Activated T-helper 1 cell treated with anti-CD3 and anti-CD28 coated beads, Interleukin-12 subunit alpha, Interleukin-12 subunit beta, Interleukin-2, Interleukin-4 antibody, amounts not matched to agents 30 ng/mL and 10 ng/mL and 1 ng/mL, durations not matched to agents 14 hours and 24 hours and 36 hours (primary cell): ENCODE measurements at regions of chr19 and their contacts with region 1.

Region 1: DNA sequence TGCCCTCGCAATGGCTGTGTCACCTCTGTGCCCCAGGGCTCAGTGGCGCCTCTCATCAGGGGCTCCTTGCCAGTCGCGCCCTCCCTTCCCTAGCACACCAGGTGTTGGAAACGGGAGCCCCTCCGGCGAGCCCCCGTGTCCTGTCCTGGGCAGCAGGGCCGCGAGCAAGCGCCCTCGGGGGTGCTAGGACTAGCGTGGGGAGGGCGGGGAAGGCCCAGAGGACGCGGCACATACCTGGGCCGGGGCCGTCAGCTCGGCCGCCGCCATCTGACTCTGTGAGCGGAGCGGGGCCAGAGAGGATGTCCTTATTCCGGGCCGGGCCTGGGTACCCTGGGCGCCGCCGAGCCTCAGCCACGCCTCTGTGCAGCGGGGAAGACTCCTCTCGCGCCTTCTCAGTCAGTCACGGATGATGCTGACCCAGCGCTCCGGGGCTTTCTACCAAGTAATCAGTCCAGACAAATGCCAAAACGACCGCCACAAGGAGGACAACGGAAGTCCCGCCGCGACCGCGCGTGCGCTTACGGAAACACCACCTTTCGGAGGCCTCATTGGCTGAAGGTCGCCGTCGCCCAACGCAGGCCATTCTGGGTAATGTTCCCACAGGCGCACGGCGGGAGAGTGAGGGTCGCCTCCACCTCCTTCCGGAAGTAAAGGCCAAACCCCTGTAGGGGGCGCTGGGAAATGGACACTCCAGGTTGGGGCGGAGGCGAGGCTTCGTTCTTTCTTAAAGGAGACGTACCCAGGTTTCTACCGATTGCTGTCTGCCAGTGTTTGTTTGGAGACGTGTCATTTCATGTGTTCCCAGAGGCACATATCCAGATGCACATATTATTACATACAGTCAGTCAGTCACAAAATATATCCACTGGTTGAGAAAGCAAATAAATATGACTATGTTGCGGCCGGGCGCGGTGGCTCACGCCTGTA is at the start of gene ZNF256:
- DNase-seq: peak; percentile 78
- H3K4me3 Mint-ChIP-seq: peak within 1 kb of the TSS; percentile 94
- H3K27ac Mint-ChIP-seq: peak within 1 kb of the TSS; percentile 89
- H3K4me1 Mint-ChIP-seq: peaks cover 12% of the 10 kb centered on the region
- H3K27me3 Mint-ChIP-seq: no peaks in the 10 kb centered on the region
- total RNA-seq, gene ZNF256: 2.5 and 3.4 TPM in 2 replicates

Region 2: DNA sequence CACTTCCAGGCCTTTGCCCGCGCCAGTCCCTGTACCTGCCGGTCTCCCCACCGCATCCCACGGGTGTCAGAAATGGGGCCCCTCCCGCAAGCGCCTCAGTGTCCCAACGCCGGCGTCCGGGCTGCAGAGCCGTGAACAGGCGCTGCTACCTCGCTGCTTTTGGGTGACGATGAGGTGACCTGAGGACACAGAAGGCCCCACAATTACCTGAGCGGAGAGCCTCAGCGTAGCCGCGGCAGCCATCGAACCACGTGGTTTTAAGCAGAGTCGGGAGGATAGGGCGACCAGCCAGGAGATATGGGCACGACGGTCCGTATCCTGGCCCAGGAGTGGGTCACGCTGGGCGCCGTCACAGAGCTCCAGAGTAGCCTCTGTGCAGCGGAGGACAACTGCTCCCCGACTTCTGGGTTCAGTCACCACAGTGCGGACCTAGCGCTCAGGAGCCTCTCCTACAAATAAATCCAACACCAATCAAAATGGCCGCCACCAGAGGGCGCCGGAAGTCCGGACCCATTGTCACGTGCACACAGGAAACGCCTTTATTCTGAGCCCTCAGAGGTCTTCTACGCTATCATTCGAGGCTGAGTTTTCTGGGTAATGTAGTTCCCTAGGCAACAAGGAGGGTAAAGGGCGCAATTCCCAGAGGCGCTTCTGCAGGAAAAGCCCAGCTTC is 58.8 kb before region 1 on chr19 and contains the start of gene ZNF814:
- intact Hi-C with region 1: no loop called
- DNase-seq: peak; percentile 56
- H3K4me3 Mint-ChIP-seq: peak within 1 kb of the TSS; percentile 89
- H3K27ac Mint-ChIP-seq: peak within 1 kb of the TSS; percentile 75
- H3K4me1 Mint-ChIP-seq: peaks cover 10% of the 10 kb centered on the region
- H3K27me3 Mint-ChIP-seq: no peaks in the 10 kb centered on the region
- total RNA-seq, gene ZNF814: 14.1 and 15.7 TPM in 2 replicates

Region 3: DNA sequence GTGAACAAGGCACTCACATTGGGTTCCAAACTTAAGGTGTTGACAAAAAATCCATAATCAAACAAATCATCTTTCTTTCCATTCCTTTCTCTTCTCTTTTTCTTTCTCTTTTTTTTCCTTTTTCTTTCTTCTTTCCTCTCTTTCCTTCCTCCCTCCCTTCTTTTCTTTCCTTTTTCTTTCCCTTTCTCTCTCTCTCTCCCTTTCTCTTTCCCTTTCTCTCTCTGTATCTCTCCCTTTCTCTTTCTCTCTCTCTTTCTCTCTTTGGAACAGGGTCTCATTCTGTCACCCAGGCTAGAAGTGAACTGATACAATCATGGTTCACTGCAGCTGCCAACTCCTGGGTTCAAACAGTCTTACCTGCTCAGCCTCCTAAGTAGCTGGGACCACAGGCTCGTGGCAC is 14.3 kb after region 1 on chr19:
- intact Hi-C with region 1: no loop called
- DNase-seq: no peak
- H3K4me3 Mint-ChIP-seq: no peak overlapping the region
- H3K27ac Mint-ChIP-seq: no peak overlapping the region
- H3K4me1 Mint-ChIP-seq: no peaks in the 10 kb centered on the region
- H3K27me3 Mint-ChIP-seq: no peaks in the 10 kb centered on the region

Region 4: DNA sequence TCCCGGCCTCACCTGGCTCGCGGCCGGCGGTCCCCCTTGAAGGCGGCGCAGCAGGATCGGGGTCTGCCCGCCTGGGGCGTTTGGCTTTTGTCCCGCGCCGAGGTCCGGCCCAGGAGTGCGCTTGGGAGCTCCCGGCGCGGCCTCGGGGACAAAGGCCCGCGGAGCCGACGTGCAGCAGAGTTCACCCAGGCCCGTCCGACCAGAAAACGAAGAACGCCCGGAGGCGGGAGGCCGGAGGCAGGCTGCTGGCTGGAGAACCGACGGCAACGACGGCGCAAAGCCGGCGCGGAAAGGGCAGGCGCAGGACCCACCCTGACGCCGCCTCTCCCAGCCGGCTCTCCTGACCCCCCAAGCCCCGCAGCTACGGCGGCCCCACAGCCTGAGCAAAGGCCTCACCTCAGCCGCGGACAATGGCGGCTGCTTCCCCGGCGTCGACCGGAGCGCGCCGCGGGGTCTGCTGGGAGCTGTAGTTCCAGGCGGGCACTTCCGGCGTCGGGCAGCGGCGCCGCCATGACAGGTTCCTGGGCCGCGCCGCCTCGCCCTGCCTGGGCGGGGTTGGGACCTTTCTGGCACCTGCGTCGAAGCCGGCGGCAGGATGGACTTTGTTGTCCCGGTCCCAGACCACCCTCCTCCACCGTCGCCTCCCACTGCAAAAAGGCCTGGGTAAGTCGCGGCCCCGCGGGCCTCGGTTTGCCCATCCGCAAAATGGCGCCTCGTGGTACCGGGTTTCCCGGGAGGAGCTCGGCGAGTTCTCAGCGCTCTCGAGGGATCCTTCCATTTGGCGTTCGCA is 55.1 kb after region 1 on chr19 and contains the start of gene ZNF606:
- intact Hi-C with region 1: loop called (anchors 1 kb)
- DNase-seq: peak; percentile 80
- H3K4me3 Mint-ChIP-seq: peak within 1 kb of the TSS; percentile 84
- H3K27ac Mint-ChIP-seq: peak within 1 kb of the TSS; percentile 67
- H3K4me1 Mint-ChIP-seq: peaks cover 20% of the 10 kb centered on the region
- H3K27me3 Mint-ChIP-seq: no peaks in the 10 kb centered on the region
- total RNA-seq, gene ZNF606: 6.3 and 6.4 TPM in 2 replicates

Region 5: DNA sequence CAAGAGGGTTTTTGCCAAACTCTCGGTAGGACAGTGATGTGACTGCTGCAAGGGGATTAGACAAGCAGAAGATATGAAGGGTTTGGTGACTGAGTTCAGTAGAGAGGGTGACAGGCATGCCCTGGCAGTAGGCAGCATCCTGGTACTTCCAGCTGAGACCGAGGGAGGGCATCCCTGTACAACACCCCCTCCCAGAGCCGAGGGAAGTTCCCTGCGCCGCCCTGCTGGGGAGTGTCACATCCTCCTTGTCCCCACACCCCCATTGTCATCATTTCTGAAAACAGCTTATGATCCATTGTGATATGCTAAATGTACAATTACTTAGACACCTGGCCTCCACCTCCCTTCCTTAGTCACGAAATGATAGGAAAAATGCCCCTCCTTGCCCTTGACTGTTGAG is 295.9 kb after region 1 on chr19:
- intact Hi-C with region 1: no loop called
- DNase-seq: no peak
- H3K4me3 Mint-ChIP-seq: no peak overlapping the region
- H3K27ac Mint-ChIP-seq: no peak overlapping the region
- H3K4me1 Mint-ChIP-seq: no peaks in the 10 kb centered on the region
- H3K27me3 Mint-ChIP-seq: no peaks in the 10 kb centered on the region